ENCODE measurements at regions of chr10 and their contacts with region 1.

Region 1: DNA sequence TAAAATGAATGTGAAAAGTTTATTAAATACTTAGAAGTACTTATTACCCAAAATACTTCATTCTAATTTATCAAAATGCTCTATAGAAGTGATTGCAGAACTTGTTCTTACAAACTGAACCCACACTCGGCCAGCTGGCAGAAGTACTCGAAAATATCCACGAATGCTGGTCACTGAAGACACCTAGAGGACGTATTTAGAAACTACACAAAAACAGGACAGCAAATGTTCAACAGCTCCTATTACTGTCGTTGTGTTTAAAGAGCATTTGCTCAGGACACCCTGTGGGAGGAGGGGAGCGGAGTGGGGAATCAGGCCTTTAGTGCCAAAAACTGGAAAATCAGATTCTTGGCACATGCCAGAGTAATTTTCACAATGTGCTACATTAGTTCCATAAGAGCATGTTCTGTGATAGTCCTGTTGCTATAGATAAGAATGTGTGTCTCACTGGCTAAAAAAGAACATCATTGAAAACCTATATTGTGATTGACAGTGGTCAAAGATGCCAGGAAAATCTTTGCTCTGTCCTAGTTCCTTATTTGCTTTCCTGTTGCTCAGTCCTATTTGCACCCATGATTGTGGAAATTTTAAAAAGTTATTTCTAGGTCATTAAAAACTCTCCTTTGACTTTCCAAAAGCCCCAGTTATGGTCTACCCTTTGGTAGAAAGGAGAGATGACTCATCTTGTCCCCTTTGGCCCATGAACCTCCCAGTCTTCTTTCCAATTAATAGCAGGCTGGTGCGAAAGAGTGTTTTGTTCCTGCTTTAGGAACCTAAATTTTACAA is 49.0 kb upstream of the NRBF2 start:
- DNase-seq: peak; percentile 82
- H3K4me3 Mint-ChIP-seq: no peak overlapping the region
- H3K27ac Mint-ChIP-seq: no peak overlapping the region
- H3K4me1 Mint-ChIP-seq: no peaks in the 10 kb centered on the region
- H3K27me3 Mint-ChIP-seq: no peaks in the 10 kb centered on the region
- CTCF ChIP-seq: peak; percentile 74

Region 2: DNA sequence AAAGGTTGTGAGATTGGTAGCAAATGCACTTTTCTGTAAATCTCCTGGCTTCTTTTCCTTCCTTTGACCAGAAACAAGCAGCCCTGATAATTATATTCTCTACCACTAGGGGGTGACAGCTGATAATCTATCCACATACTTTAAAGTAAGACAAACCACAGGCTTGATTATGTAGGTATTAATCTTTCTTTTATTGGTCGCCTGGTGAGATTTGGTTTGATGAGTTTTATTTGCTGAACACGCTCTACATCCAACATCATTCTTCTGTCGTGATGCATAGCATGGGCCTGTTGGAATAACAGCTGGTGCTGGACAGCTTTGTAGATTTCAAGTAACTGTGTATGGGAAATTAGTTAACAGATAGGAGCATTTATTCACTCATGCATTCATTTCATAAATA is 646.4 kb before region 1 on chr10:
- CTCF ChIA-PET with region 1: interaction called, 4 read pairs
- POLR2A ChIA-PET with region 1: no interaction called
- intact Hi-C with region 1: loop called (anchors 10 kb)
- DNase-seq: peak; percentile 64
- H3K4me3 Mint-ChIP-seq: no peak overlapping the region
- H3K27ac Mint-ChIP-seq: no peak overlapping the region
- H3K4me1 Mint-ChIP-seq: peaks cover 22% of the 10 kb centered on the region
- H3K27me3 Mint-ChIP-seq: no peaks in the 10 kb centered on the region
- CTCF ChIP-seq: peak; percentile 69

Region 3: GRCh38 chr10:62594093-62594520 is 490.0 kb before region 1 on chr10:
- CTCF ChIA-PET with region 1: interaction called, 60 read pairs
- POLR2A ChIA-PET with region 1: no interaction called
- intact Hi-C with region 1: loop called (anchors 1 kb)
- DNase-seq: peak; percentile 64
- H3K4me3 Mint-ChIP-seq: no peak overlapping the region
- H3K27ac Mint-ChIP-seq: no peak overlapping the region
- H3K4me1 Mint-ChIP-seq: peaks cover 6% of the 10 kb centered on the region
- H3K27me3 Mint-ChIP-seq: no peaks in the 10 kb centered on the region
- CTCF ChIP-seq: peak; percentile 87

Region 4: DNA sequence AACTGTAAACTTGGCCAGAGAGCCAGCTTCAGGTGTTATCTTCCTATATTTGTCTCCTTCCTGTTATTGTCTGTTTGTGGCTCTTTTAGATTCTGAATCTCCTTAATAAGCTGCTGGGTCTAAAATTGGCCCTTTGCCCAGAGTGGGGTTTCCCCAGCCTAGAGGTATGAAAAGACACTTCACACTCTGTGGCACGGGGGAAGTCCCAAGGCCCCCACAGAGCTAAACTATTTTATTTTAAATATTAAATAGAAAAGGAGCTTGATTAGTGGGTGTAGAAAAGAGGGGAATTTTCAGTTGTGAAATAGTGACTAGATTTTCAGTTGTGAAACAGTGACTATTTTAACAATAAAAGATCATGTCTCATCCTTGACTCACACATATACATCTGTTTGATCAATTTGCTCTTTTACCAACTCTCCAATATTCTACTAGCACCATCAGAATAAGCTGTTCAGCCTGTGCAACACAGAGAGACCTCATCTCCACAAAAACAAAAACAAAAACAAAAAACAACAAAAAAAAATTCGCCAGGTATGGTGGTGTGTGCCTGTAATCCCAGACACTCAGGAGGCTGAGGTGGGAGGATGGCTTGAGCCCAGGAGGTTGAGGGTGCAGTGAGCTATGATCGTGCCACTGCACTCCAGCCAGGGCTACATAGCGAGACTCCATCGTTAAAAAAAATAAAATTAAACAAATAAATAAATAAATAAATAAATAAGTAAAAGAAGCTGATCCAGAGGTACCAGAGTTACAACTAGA is 304.4 kb before region 1 on chr10:
- CTCF ChIA-PET with region 1: no interaction called
- POLR2A ChIA-PET with region 1: no interaction called
- intact Hi-C with region 1: no loop called
- DNase-seq: peak; percentile 54
- H3K4me3 Mint-ChIP-seq: no peak overlapping the region
- H3K27ac Mint-ChIP-seq: no peak overlapping the region
- H3K4me1 Mint-ChIP-seq: peaks cover 7% of the 10 kb centered on the region
- H3K27me3 Mint-ChIP-seq: peaks cover 10% of the 10 kb centered on the region
- CTCF ChIP-seq: no peak

Region 5: GRCh38 chr10:62804356-62805230 is 279.5 kb before region 1 on chr10 and contains the start of gene ADO:
- CTCF ChIA-PET with region 1: interaction called, 4 read pairs
- POLR2A ChIA-PET with region 1: no interaction called
- intact Hi-C with region 1: loop called (anchors 1 kb)
- DNase-seq: peak; percentile 77
- H3K4me3 Mint-ChIP-seq: peak within 1 kb of the TSS; percentile 91
- H3K27ac Mint-ChIP-seq: peak within 1 kb of the TSS; percentile 98
- H3K4me1 Mint-ChIP-seq: peaks cover 22% of the 10 kb centered on the region
- H3K27me3 Mint-ChIP-seq: peaks cover 11% of the 10 kb centered on the region
- CTCF ChIP-seq: no peak
- total RNA-seq, gene ADO: 22.1 and 24.3 TPM in 2 replicates

Region 6: GRCh38 chr10:63003816-63004453 is 80.2 kb before region 1 on chr10:
- CTCF ChIA-PET with region 1: interaction called, 4 read pairs
- POLR2A ChIA-PET with region 1: no interaction called
- intact Hi-C with region 1: loop called (anchors 2 kb)
- DNase-seq: peak; percentile 18
- H3K4me3 Mint-ChIP-seq: no peak overlapping the region
- H3K27ac Mint-ChIP-seq: no peak overlapping the region
- H3K4me1 Mint-ChIP-seq: peaks cover 18% of the 10 kb centered on the region
- H3K27me3 Mint-ChIP-seq: no peaks in the 10 kb centered on the region
- CTCF ChIP-seq: no peak

Region 7: DNA sequence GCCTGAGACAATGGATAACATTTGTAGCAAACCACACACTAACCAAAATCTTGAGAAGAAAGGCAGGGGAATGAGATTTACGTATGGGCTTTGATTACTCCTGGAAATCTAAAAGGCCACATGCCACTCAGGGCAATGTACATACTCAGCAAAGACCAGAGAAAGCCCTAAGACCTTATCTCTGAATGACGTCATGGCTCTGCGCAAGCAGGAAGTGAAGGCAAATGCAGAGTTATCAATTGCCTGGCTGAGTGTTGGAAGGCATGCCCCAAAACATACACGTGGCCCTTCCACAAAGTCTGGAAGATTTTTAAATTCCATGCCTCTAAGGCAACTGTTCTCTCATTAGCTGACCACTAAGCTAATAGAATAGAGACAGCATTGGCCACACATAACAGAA is 41.8 kb before region 1 on chr10:
- CTCF ChIA-PET with region 1: no interaction called
- POLR2A ChIA-PET with region 1: no interaction called
- intact Hi-C with region 1: no loop called
- DNase-seq: no peak
- H3K4me3 Mint-ChIP-seq: no peak overlapping the region
- H3K27ac Mint-ChIP-seq: no peak overlapping the region
- H3K4me1 Mint-ChIP-seq: no peaks in the 10 kb centered on the region
- H3K27me3 Mint-ChIP-seq: peaks cover 7% of the 10 kb centered on the region
- CTCF ChIP-seq: no peak

Region 8: GRCh38 chr10:63133056-63133820 is 49.1 kb after region 1 on chr10 and contains the start of gene NRBF2:
- CTCF ChIA-PET with region 1: no interaction called
- POLR2A ChIA-PET with region 1: interaction called, 6 read pairs
- intact Hi-C with region 1: loop called (anchors 2 kb)
- DNase-seq: peak; percentile 98
- H3K4me3 Mint-ChIP-seq: peak within 1 kb of the TSS; percentile 86
- H3K27ac Mint-ChIP-seq: peak within 1 kb of the TSS; percentile 86
- H3K4me1 Mint-ChIP-seq: peaks cover 6% of the 10 kb centered on the region
- H3K27me3 Mint-ChIP-seq: no peaks in the 10 kb centered on the region
- CTCF ChIP-seq: peak; percentile 18
- total RNA-seq, gene NRBF2: 44.9 and 56.9 TPM in 2 replicates

Region 9: DNA sequence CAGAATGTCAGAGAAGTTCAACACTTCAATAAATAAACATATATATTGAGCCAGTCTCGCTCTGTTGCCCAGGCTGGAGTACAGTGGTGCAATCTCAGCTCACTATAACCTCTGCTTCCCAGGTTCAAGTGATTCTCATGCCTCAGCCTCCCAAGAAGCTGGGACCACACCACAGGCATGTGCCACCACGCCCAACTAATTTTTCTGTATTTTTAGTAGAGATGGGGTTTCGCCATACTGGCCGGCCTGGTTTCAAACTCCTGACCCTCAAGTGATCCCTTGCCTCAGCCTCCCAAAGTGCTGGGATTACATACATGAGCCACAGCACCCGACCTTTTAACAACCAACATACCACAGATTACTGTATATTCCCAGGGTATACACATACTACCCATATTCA is 247.5 kb after region 1 on chr10:
- CTCF ChIA-PET with region 1: no interaction called
- POLR2A ChIA-PET with region 1: no interaction called
- intact Hi-C with region 1: no loop called
- DNase-seq: peak; percentile 4
- H3K4me3 Mint-ChIP-seq: no peak overlapping the region
- H3K27ac Mint-ChIP-seq: peak overlapping the region; percentile 3
- H3K4me1 Mint-ChIP-seq: peaks cover 6% of the 10 kb centered on the region
- H3K27me3 Mint-ChIP-seq: no peaks in the 10 kb centered on the region
- CTCF ChIP-seq: no peak

Measured in MCF 10A (cell line).